Psoas muscle (tissue), 8 donors: ENCODE measurements at regions of chr3 and their contacts with region 1.

Region 1: DNA sequence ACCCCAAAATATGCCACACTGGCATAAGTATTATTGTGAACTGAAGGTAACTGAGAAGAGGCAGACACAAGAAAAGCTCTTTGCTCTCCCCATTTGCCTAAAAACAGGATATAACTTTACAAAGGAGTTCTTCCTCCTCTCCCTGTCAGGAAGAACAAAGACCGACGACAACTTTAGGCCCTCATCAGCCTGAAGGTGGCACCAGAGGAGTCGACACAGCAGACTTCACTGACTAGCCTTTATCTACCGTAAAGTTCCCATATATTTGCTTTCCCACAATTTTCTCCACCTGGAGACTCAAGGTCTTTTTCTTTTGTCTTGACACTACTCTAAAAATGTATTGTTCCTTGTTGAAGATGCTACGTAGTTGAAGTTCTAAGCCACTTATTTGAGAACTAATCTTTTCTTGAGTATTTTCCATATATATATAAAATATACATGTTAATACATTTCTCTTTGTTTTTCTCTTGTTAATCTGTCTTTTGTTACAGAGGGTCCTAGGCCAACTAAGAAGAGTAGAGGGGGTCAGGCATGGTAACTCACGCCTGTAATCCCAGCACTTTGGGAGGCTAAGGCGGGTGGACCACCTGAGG is 16.2 kb upstream of the XIRP1 start:
- DNase-seq: peak; percentile 45 to 72
- ATAC-seq: peak; percentile 85 to 98 (median 92)
- H3K4me3 ChIP-seq: no peak overlapping the region
- H3K27ac ChIP-seq: peak overlapping the region; percentile 63
- H3K4me1 ChIP-seq: peaks cover 16% of the 10 kb centered on the region
- H3K27me3 ChIP-seq: no peaks in the 10 kb centered on the region
- CTCF ChIP-seq: peak; percentile 69

Region 2: GRCh38 chr3:39126532-39127071 is 82.0 kb before region 1 on chr3:
- intact Hi-C with region 1: loop called in 1 of 2 experiments (anchors 5 kb)
- DNase-seq: no peak
- ATAC-seq: peak; percentile 69 to 93 (median 84)
- H3K4me3 ChIP-seq: no peak overlapping the region
- H3K27ac ChIP-seq: no peak overlapping the region
- H3K4me1 ChIP-seq: peaks cover 5% of the 10 kb centered on the region
- H3K27me3 ChIP-seq: no peaks in the 10 kb centered on the region
- CTCF ChIP-seq: peak; percentile 57

Region 3: GRCh38 chr3:39260957-39261356 is 52.4 kb after region 1 on chr3:
- intact Hi-C with region 1: loop called in 1 of 2 experiments (anchors 2 kb)
- DNase-seq: peak; percentile 85 to 92
- ATAC-seq: peak; percentile 95 to 99 (median 96)
- H3K4me3 ChIP-seq: no peak overlapping the region
- H3K27ac ChIP-seq: peak overlapping the region; percentile 73
- H3K4me1 ChIP-seq: peaks cover 45% of the 10 kb centered on the region
- H3K27me3 ChIP-seq: no peaks in the 10 kb centered on the region
- CTCF ChIP-seq: peak; percentile 65